ENCODE measurements at regions of chr12 and their contacts with region 1.

Region 1: DNA sequence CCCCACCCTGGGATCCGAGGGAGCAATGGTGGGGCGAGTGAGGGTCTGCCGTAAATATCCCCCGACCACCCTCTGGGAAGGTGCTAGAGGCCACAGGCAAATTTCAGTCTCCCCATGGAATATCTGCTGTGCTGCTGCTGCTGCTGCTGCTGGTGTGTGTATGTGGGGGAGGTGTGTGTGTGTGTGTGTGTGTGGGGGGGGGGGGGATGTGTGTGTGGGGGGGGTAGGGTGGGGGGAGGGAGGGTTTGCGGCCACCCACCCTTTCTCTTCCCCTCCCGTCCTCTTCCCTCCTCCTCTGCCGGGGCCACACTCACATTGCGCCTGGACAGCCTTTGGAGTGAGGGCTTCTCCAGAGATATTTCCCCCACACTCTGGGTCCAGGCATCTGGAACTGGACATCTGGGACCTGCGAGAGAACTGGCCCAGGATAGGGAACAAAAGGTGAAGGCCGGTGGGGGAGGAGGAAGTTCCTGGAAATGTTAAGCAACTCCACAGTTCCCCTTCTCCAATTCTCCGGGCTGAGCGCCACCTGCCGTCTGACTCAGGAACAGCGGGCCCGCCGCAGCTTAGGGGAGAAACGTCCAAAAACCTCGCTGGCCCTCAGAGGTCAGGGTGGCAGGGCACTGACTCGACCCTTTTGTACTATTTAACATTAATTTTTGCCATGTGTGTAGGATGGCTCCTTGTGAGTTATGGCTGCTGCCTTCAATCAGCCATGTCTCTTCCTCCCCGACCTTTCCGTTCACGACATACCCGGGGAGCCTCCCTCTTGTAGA is at the start of gene C1RL:
- DNase-seq: peak; percentile 63 to 73 (median 69)
- H3K4me3 ChIP-seq: peak within 1 kb of the TSS; percentile 54 to 94
- H3K4me3 Mint-ChIP-seq: peak within 1 kb of the TSS; percentile 93 to 96 (median 94)
- H3K27ac ChIP-seq: peak within 1 kb of the TSS; percentile 74
- H3K27ac Mint-ChIP-seq: peak within 1 kb of the TSS; percentile 91 to 97 (median 95)
- H3K4me1 ChIP-seq: peaks cover 38% of the 10 kb centered on the region
- H3K4me1 Mint-ChIP-seq: peaks cover 22 to 53% (median 40%) of the 10 kb centered on the region in 4 donors
- H3K27me3 ChIP-seq: no peaks in the 10 kb centered on the region
- H3K27me3 Mint-ChIP-seq: no peaks in the 10 kb centered on the region
- total RNA-seq, gene C1RL: 30.7 to 33.6 TPM

Region 2: GRCh38 chr12:5808981-5809380 is 1300.0 kb before region 1 on chr12:
- CTCF ChIA-PET with region 1: no interaction called
- POLR2A ChIA-PET with region 1: no interaction called
- intact Hi-C with region 1: no loop called
- DNase-seq: no peak
- H3K4me3 ChIP-seq: no peak overlapping the region
- H3K4me3 Mint-ChIP-seq: no peak overlapping the region
- H3K27ac ChIP-seq: no peak overlapping the region
- H3K27ac Mint-ChIP-seq: no peak overlapping the region
- H3K4me1 ChIP-seq: no peaks in the 10 kb centered on the region
- H3K4me1 Mint-ChIP-seq: no peaks in the 10 kb centered on the region
- H3K27me3 ChIP-seq: no peaks in the 10 kb centered on the region
- H3K27me3 Mint-ChIP-seq: peaks cover under 1 to 5% of the 10 kb centered on the region in 2 donors

Region 3: DNA sequence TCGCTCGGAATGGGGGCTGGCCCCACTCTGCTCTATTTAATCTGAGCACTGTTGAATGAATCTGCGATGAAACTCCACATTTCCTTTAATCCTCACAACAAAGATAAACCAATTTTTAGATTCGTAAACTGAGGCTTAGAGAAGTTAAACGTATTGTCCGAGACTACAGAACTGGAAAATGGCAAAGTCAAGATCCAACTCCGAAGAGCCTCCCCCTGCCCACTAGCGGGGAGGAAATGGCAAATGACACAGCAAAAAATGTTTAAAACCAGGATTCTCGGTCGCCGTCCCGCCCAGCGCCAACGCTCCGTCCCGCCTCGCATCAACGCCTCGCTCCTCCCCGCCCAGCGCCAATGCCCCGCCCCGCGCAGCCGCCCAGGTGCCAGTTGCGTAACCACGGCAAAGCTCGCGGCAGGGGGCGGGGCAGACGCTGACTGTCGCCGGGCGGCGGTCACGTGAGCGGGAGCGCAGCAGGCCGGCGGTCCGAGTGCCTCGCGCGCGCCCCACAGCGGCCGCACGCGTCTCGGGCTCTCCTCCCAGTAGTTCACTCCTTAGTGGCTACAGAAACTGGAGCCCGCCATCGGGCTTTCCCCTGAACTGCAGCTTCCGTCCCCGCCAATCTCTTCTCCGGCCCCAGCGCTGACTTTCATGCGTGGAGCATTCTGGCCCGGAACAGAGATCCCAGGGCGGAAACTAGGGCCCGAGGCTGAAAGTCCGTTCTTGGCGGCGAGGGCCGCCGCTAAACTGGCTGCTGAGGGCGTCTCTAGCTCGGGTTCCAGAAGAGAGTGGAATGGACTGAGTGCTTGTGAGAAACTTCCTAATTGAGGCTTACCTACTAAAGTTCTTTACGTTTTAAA is 218.0 kb before region 1 on chr12:
- CTCF ChIA-PET with region 1: interaction called, 3 read pairs
- POLR2A ChIA-PET with region 1: interaction called, 10 read pairs
- intact Hi-C with region 1: no loop called
- DNase-seq: peak; percentile 97 to 98 (median 98)
- H3K4me3 ChIP-seq: peak overlapping the region; percentile 74 to 93
- H3K4me3 Mint-ChIP-seq: peak overlapping the region; percentile 82 to 87 (median 85)
- H3K27ac ChIP-seq: peak overlapping the region; percentile 91
- H3K27ac Mint-ChIP-seq: peak overlapping the region; percentile 92 to 98 (median 95)
- H3K4me1 ChIP-seq: peaks cover 16% of the 10 kb centered on the region
- H3K4me1 Mint-ChIP-seq: peaks cover 5 to 15% (median 11%) of the 10 kb centered on the region in 4 donors
- H3K27me3 ChIP-seq: no peaks in the 10 kb centered on the region
- H3K27me3 Mint-ChIP-seq: no peaks in the 10 kb centered on the region

Region 4: GRCh38 chr12:6921996-6922946 is 186.7 kb before region 1 on chr12:
- CTCF ChIA-PET with region 1: interaction called, 50 read pairs
- POLR2A ChIA-PET with region 1: interaction called, 11 read pairs
- intact Hi-C with region 1: loop called (anchors 1 kb)
- DNase-seq: no peak
- H3K4me3 ChIP-seq: no peak overlapping the region
- H3K4me3 Mint-ChIP-seq: no peak overlapping the region
- H3K27ac ChIP-seq: no peak overlapping the region
- H3K27ac Mint-ChIP-seq: peak overlapping the region in 4 of 7 donors; percentile 30 to 95 (median 49)
- H3K4me1 ChIP-seq: peaks cover 19% of the 10 kb centered on the region
- H3K4me1 Mint-ChIP-seq: peaks cover 13 to 33% (median 20%) of the 10 kb centered on the region in 4 donors
- H3K27me3 ChIP-seq: no peaks in the 10 kb centered on the region
- H3K27me3 Mint-ChIP-seq: no peaks in the 10 kb centered on the region

Region 5: DNA sequence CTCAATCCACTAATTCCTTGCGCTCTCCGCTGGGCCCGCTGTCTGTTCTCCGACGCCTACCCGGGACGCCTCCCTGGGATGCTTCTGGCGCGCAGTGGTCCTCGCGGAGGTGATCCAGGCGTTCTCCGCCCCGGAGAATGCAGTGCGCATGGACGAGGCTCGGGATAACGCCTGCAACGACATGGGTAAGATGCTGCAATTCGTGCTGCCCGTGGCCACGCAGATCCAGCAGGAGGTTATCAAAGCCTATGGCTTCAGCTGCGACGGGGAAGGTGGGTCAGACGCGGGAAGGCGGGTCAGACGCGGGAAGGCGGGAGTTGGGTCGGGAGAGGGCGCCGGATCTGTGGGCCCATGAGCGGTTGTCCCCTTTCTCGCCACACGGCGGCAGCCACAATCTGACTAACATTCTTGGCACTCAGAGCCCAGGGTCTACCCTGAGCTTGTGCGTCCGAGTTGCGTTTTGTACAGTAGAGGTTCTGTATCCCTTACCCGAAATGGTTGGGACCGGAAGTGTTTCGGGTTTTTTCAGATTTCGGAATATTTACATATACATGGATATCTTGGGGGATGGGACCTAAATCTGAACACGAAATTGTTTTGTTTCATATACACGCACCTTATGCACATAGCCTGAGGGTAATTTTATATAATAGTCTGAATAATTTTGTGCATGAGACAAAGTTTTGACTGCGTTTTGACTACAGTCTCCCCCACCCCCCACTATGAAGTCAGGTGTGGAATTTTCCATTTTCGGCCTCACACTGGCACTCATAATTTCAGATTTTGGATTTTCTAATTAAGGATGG is 164.4 kb before region 1 on chr12:
- CTCF ChIA-PET with region 1: interaction called, 36 read pairs
- POLR2A ChIA-PET with region 1: interaction called, 62 read pairs
- intact Hi-C with region 1: loop called (anchors 1 kb)
- DNase-seq: peak; percentile 84 to 90 (median 85)
- H3K4me3 ChIP-seq: peak overlapping the region; percentile 87 to 90
- H3K4me3 Mint-ChIP-seq: peak overlapping the region; percentile 91 to 99 (median 98)
- H3K27ac ChIP-seq: peak overlapping the region; percentile 91
- H3K27ac Mint-ChIP-seq: peak overlapping the region; percentile 95 to 100 (median 98)
- H3K4me1 ChIP-seq: peaks cover 66% of the 10 kb centered on the region
- H3K4me1 Mint-ChIP-seq: peaks cover 37 to 74% (median 60%) of the 10 kb centered on the region in 4 donors
- H3K27me3 ChIP-seq: no peaks in the 10 kb centered on the region
- H3K27me3 Mint-ChIP-seq: no peaks in the 10 kb centered on the region

Region 6: GRCh38 chr12:7018350-7019042 is 90.5 kb before region 1 on chr12 and contains the start of gene LPCAT3:
- CTCF ChIA-PET with region 1: interaction called, 7 read pairs
- POLR2A ChIA-PET with region 1: interaction called, 20 read pairs
- intact Hi-C with region 1: loop called (anchors 1 kb)
- DNase-seq: peak; percentile 98 to 99 (median 98)
- H3K4me3 ChIP-seq: peak within 1 kb of the TSS; percentile 72 to 76
- H3K4me3 Mint-ChIP-seq: peak within 1 kb of the TSS; percentile 86 to 99 (median 95)
- H3K27ac ChIP-seq: peak within 1 kb of the TSS; percentile 85
- H3K27ac Mint-ChIP-seq: peak within 1 kb of the TSS; percentile 90 to 98 (median 95)
- H3K4me1 ChIP-seq: peaks cover 23% of the 10 kb centered on the region
- H3K4me1 Mint-ChIP-seq: peaks cover 18 to 37% (median 24%) of the 10 kb centered on the region in 4 donors
- H3K27me3 ChIP-seq: no peaks in the 10 kb centered on the region
- H3K27me3 Mint-ChIP-seq: no peaks in the 10 kb centered on the region
- total RNA-seq, gene LPCAT3: 18.3 to 21.6 TPM

Region 7: GRCh38 chr12:7142056-7142644 is 33.2 kb after region 1 on chr12:
- CTCF ChIA-PET with region 1: interaction called, 42 read pairs
- POLR2A ChIA-PET with region 1: interaction called, 4 read pairs
- intact Hi-C with region 1: no loop called
- DNase-seq: peak; percentile 40 to 53 (median 44)
- H3K4me3 ChIP-seq: no peak overlapping the region
- H3K4me3 Mint-ChIP-seq: no peak overlapping the region
- H3K27ac ChIP-seq: no peak overlapping the region
- H3K27ac Mint-ChIP-seq: peak overlapping the region in 4 of 7 donors; percentile 16 to 80 (median 43)
- H3K4me1 ChIP-seq: no peaks in the 10 kb centered on the region
- H3K4me1 Mint-ChIP-seq: peaks cover 0 to 12% (median 4%) of the 10 kb centered on the region in 4 donors
- H3K27me3 ChIP-seq: no peaks in the 10 kb centered on the region
- H3K27me3 Mint-ChIP-seq: no peaks in the 10 kb centered on the region

Measured in CD4-positive, alpha-beta memory T cell (primary cell).